Right ventricle myocardium inferior (tissue), 1 donor: ENCODE measurements at regions of chr19 and their contacts with region 1.

Region 1: GRCh38 chr19:6233827-6234511 is 45.8 kb downstream of the MLLT1 start:
- DNase-seq: no peak
- ATAC-seq: peak; percentile 59

Region 2: GRCh38 chr19:5690125-5690954 is 543.6 kb before region 1 on chr19 and contains the start of gene RPL36:
- intact Hi-C with region 1: no loop called
- DNase-seq: peak; percentile 99
- ATAC-seq: peak; percentile 81
- total RNA-seq, gene RPL36: 435 TPM

Region 3: DNA sequence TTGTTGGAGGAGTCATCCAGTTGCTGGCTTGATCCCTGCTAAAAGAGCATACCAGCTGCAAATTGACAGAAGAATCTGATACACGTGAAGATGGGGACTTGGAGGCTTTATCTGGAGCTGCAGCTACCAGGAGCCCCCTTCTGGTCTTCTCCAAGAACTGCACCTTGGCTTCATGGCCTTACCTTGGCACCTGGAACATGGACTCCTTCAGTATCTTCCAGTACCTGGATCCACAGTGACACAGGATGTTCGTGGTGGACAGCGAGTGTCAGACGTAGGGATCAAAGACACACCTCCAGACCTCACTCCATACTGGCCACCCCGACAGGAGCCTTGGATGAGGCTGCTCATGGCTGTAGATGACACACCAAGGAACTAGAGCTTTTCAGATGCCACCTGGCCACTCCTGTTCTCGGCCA is 108.4 kb before region 1 on chr19:
- intact Hi-C with region 1: no loop called
- DNase-seq: no peak
- ATAC-seq: peak; percentile 80

Region 4: GRCh38 chr19:6161271-6161850 is 72.6 kb before region 1 on chr19:
- intact Hi-C with region 1: no loop called
- DNase-seq: no peak
- ATAC-seq: no peak

Region 5: DNA sequence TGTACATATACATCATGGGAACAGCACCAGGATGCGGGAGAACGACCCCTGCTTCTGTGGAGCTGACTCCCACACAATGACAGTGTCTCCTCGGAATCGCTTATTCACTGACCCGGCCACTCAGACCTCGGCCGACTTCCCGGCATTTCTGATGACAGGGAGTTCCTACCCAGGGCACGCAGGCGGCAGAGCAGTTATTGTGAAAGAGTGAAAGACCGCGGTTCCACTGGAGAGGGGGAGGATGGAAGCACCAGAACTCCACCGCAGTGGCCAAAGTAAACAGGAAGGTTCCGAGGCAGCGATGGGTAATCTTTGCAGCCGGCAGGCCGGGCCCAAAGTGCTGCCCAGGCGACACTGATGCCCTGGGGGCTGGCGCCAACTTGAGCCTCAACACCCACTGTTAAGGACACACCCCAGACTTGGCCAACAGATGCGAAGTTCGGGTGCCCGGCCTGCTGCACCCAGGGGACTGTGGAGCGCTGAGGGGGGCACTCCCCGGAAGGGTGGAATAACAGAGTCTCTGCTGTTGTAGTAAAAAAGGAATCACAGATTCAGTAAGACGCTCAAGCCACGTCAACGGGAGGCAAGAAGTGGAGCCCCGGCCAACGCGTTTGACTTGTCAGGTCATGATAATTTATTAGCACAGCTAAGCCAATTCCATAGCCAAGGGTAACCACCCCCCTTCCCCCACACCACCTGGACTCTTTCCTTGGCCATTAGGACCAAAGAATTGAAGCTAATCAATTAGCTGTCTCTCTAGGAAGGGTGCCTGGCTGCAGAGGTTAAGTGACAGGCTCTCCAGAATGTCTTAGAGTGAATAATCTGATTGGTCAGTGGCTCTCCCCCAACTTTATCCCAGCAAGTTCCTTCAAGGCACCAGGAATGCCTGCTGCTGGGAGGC is 40.0 kb after region 1 on chr19:
- intact Hi-C with region 1: loop called (anchors 1 kb)
- DNase-seq: peak; percentile 94
- ATAC-seq: peak; percentile 81

Region 6: DNA sequence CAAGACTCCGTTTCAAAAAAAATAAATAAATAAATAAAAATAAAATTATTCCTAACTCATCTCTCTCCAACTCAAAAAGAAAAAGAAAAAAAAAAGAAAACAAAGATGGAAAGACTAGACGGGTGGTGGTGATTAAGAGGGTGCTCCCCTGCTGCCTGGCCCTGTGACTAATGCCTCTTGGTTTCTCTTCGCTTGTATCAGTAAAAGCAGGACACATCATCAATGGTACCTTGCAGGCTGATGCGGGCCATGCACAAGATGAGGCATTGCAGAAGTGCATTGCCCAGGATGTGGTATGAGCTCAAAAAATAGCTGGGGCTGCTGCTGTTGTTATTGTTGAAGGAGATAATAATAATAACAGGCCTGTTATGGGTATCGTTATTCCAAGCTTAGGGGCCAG is 84.8 kb after region 1 on chr19:
- intact Hi-C with region 1: no loop called
- DNase-seq: no peak
- ATAC-seq: no peak